Mammary epithelial cell (primary cell): ENCODE measurements at regions of chr7 and their contacts with region 1.

Region 1: GRCh38 chr7:91156316-91157185 is 107.7 kb upstream of the FZD1 start:
- DNase-seq: no peak
- H3K4me3 ChIP-seq: no peak overlapping the region
- H3K27ac ChIP-seq: no peak overlapping the region
- H3K4me1 ChIP-seq: no peaks in the 10 kb centered on the region
- H3K27me3 ChIP-seq: no peaks in the 10 kb centered on the region
- CTCF ChIP-seq: no peak

Region 2: DNA sequence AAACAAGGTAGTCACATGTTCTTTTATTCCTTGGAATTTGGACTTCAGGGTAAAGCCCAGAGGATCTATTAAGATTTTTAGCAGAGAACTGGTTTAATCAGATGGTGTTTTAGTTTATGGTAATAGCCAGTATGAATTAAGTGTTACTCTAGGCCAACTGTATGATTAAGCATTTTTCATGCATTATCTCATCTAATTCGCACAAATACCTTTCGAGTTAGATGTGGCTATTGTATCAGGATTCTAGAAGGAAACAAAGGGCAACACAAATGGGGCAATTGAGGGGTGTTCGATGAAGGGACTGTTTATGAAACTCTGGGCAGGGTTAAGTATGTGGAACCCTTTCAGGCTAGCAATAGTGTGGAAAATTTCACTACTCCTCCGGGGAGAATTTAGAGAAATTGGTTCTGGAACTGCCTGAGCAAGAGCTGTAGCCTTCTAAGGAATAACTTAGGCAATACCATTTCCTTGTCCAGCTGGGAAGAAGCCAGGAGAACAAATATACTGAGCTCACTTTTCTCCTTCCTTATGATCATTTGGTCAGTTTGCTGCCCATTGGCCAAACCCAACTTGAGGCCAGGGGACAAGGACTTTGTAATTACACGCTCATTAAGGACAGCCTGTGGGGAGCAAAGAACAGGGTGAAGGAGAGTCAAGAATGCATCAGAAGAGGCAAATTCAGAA is 211.3 kb before region 1 on chr7:
- CTCF ChIA-PET with region 1: no interaction called
- dilution Hi-C with region 1: no loop called
- in situ Hi-C with region 1: no loop called
- intact Hi-C with region 1: no loop called
- DNase-seq: no peak
- H3K4me3 ChIP-seq: no peak overlapping the region
- H3K27ac ChIP-seq: no peak overlapping the region
- H3K4me1 ChIP-seq: no peaks in the 10 kb centered on the region
- H3K27me3 ChIP-seq: no peaks in the 10 kb centered on the region
- CTCF ChIP-seq: no peak

Region 3: DNA sequence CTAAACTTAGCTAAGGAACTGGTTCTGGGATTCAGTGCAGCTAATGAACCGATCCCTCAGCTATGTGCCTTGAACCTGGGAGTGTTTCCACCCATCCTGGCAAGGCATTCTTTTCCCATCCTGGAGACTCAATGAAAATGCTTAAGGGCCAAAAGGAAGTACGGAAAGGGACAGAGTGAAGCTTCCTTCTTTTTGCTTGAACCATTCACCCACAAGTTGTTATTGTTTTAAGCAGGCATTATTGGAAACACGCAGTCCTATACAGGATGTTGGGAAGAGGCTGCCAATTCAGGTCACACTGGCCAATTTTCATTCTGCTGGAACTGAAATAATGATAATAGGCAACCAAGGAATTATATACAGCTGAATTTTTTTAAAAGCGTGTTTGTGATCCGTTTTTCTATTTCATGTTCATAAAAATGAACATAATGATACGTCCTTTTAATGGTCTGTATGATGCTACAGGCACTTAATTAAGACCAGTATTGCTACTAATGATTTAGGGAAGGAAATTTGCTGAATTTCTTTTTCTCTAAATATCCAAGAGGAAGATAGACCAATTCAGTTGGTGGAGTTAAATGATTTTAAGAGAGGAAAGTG is 49.9 kb after region 1 on chr7:
- CTCF ChIA-PET with region 1: no interaction called
- dilution Hi-C with region 1: loop called (anchors 5 kb)
- in situ Hi-C with region 1: no loop called
- intact Hi-C with region 1: no loop called
- DNase-seq: no peak
- H3K4me3 ChIP-seq: no peak overlapping the region
- H3K27ac ChIP-seq: no peak overlapping the region
- H3K4me1 ChIP-seq: no peaks in the 10 kb centered on the region
- H3K27me3 ChIP-seq: no peaks in the 10 kb centered on the region
- CTCF ChIP-seq: no peak

Region 4: DNA sequence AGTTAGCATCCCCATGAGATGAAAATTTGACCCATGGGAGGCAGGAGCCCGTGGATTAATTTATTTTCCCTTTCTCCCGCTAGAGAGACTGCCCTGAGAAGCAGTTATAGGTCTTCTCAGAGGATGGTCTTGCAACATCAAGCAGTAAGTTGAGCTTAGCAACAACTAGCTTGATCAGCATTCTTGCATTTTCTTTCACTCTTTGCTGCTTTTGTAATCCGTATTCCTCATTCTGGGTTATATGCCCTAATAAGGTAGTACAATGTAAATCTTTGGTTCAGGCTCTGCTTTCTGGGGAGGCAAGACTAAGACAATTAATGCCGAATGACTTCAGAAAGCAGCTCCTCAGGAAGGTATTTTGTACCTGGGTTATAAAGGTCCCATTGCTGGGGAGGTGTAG is 254.5 kb after region 1 on chr7:
- CTCF ChIA-PET with region 1: no interaction called
- dilution Hi-C with region 1: no loop called
- in situ Hi-C with region 1: no loop called
- intact Hi-C with region 1: no loop called
- DNase-seq: no peak
- H3K4me3 ChIP-seq: no peak overlapping the region
- H3K27ac ChIP-seq: no peak overlapping the region
- H3K4me1 ChIP-seq: no peaks in the 10 kb centered on the region
- H3K27me3 ChIP-seq: peaks cover 9% of the 10 kb centered on the region
- CTCF ChIP-seq: no peak